ENCODE measurements at regions of chr17 and their contacts with region 1.

Region 1: GRCh38 chr17:18033442-18034099 is 5.4 kb downstream of the ATPAF2 start:
- DNase-seq: peak; percentile 72 to 77 (median 74)
- H3K4me3 ChIP-seq: no peak overlapping the region
- H3K4me3 Mint-ChIP-seq: peak overlapping the region in 2 of 8 donors; percentile 12 to 26
- H3K27ac ChIP-seq: no peak overlapping the region
- H3K27ac Mint-ChIP-seq: peak overlapping the region in 6 of 7 donors; percentile 43 to 89 (median 76)
- H3K4me1 ChIP-seq: peaks cover 24% of the 10 kb centered on the region
- H3K4me1 Mint-ChIP-seq: peaks cover 17 to 38% (median 25%) of the 10 kb centered on the region in 4 donors
- H3K27me3 ChIP-seq: no peaks in the 10 kb centered on the region
- H3K27me3 Mint-ChIP-seq: no peaks in the 10 kb centered on the region

Region 2: DNA sequence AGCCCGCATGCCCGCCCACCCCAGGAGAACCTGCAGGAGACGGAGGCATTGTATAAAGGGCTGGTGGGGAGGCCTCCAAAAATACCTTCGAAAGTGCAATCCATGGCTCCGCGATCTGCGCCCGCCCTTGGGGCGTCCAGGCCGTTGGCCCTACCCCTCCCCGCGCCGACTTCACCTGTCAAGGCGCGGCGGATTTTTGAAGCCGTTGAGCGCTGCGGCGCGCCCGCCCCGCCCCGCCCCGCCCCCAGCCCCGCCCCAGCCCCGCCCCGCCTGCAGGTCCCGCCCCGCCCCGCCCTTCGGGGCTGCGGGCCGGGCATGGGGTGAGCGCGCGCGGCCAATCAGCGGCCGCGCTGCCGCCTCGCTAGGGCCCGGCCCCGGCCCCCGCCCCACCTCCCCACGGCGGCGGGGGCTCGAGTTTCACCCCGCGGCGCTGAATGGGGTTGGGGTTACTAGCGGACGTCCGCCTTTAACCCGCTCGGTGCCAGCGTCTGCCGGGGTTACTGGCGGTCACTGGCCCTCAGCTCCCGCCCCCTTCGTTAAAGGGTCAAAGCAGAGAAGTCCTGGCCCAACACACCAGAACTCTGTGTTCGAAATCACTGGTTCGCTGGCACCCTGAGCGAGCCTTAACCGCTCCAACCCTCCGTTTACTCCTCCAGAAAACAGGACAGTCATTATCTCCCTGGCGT is 210.0 kb before region 1 on chr17:
- CTCF ChIA-PET with region 1: no interaction called
- POLR2A ChIA-PET with region 1: no interaction called
- intact Hi-C with region 1: loop called (anchors 1 kb)
- DNase-seq: peak; percentile 81 to 87 (median 85)
- H3K4me3 ChIP-seq: peak overlapping the region; percentile 38 to 53
- H3K4me3 Mint-ChIP-seq: peak overlapping the region; percentile 76 to 92 (median 81)
- H3K27ac ChIP-seq: peak overlapping the region; percentile 82
- H3K27ac Mint-ChIP-seq: peak overlapping the region; percentile 88 to 97 (median 96)
- H3K4me1 ChIP-seq: peaks cover 87% of the 10 kb centered on the region
- H3K4me1 Mint-ChIP-seq: peaks cover 41 to 96% (median 76%) of the 10 kb centered on the region in 4 donors
- H3K27me3 ChIP-seq: no peaks in the 10 kb centered on the region
- H3K27me3 Mint-ChIP-seq: no peaks in the 10 kb centered on the region

Region 3: GRCh38 chr17:17890773-17891759 is 142.5 kb before region 1 on chr17:
- CTCF ChIA-PET with region 1: interaction called, 47 read pairs
- POLR2A ChIA-PET with region 1: interaction called, 3 read pairs
- intact Hi-C with region 1: no loop called
- DNase-seq: peak in 4 of 5 donors; percentile 30 to 40 (median 35)
- H3K4me3 ChIP-seq: no peak overlapping the region
- H3K4me3 Mint-ChIP-seq: no peak overlapping the region
- H3K27ac ChIP-seq: no peak overlapping the region
- H3K27ac Mint-ChIP-seq: peak overlapping the region in 5 of 7 donors; percentile 25 to 88 (median 64)
- H3K4me1 ChIP-seq: no peaks in the 10 kb centered on the region
- H3K4me1 Mint-ChIP-seq: peaks cover 0 to 5% (median 3%) of the 10 kb centered on the region in 4 donors
- H3K27me3 ChIP-seq: no peaks in the 10 kb centered on the region
- H3K27me3 Mint-ChIP-seq: no peaks in the 10 kb centered on the region

Region 4: GRCh38 chr17:17919169-17920107 is 114.1 kb before region 1 on chr17:
- CTCF ChIA-PET with region 1: interaction called, 3 read pairs
- POLR2A ChIA-PET with region 1: no interaction called
- intact Hi-C with region 1: loop called (anchors 1 kb)
- DNase-seq: peak; percentile 58 to 71 (median 61)
- H3K4me3 ChIP-seq: no peak overlapping the region
- H3K4me3 Mint-ChIP-seq: no peak overlapping the region
- H3K27ac ChIP-seq: no peak overlapping the region
- H3K27ac Mint-ChIP-seq: no peak overlapping the region
- H3K4me1 ChIP-seq: peaks cover 3% of the 10 kb centered on the region
- H3K4me1 Mint-ChIP-seq: peaks cover 6 to 25% (median 8%) of the 10 kb centered on the region in 4 donors
- H3K27me3 ChIP-seq: no peaks in the 10 kb centered on the region
- H3K27me3 Mint-ChIP-seq: no peaks in the 10 kb centered on the region

Region 5: DNA sequence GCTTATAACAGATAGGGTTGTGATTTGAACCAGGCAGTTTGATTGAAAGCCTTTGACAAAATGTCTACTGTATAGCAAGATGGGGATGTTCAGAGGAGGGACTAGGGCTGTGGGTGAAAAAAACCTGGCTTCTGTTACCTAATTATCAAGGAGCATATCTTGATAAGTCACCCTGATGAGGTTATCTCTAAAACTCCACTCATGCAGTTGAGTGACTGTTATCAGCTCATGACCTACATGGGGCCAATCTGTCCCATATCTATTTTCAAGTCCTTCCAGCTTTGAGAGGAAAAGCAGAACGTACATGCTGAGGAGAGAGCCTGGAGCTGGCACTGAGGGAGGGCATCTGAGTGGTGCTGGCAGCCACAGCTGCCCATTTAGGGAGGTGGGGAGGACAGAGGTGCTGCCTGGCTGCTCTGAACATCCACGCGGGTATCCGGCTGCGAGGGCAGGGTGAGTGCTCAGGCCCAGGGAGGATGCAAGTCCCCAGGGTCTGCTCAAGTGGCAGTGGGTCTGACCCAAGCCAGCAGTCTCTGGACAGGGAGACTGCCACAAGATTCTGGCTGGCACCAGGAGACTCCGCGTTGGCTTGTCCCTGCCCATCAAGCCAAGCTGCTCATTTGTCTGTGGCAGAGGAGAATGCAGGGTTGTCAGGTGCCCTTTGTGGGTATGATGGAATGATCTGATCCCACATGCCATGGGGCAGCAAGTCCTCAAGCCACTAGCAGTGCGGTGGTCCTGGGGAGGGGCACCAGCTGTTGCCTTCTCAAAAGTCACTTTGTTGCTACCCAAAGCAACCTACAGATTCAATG is 23.8 kb before region 1 on chr17:
- CTCF ChIA-PET with region 1: no interaction called
- POLR2A ChIA-PET with region 1: no interaction called
- intact Hi-C with region 1: no loop called
- DNase-seq: no peak
- H3K4me3 ChIP-seq: no peak overlapping the region
- H3K4me3 Mint-ChIP-seq: no peak overlapping the region
- H3K27ac ChIP-seq: no peak overlapping the region
- H3K27ac Mint-ChIP-seq: peak overlapping the region in 1 of 7 donors; percentile 41
- H3K4me1 ChIP-seq: no peaks in the 10 kb centered on the region
- H3K4me1 Mint-ChIP-seq: peaks cover 0 to 2% (median 0%) of the 10 kb centered on the region in 4 donors
- H3K27me3 ChIP-seq: no peaks in the 10 kb centered on the region
- H3K27me3 Mint-ChIP-seq: no peaks in the 10 kb centered on the region